ENCODE measurements at regions of chr9 and their contacts with region 1.

Region 1: DNA sequence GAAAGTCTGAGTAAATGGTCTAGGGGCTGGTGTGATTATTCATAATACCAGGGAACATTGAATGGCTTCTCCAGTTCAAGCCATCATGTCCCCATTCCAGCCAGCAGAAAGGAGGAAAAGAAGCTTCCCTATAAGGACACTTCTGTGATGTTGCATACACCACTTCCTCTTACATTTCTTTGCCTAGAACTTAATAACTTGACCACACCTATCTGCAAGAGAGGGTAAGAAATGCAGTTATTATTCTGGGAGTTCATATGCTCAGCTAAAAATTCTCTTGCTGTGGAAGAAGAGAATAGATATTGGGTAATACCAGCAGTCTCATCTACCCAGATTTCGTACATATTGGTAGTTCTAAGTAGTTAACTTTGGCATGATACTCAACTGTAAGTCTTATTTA is 166.1 kb downstream of the SLC28A3 start:
- DNase-seq: no peak
- CTCF ChIP-seq: no peak

Region 2: GRCh38 chr9:84146893-84147710 is 27.4 kb before region 1 on chr9:
- CTCF ChIA-PET with region 1: interaction called, 19 read pairs
- POLR2A ChIA-PET with region 1: no interaction called
- DNase-seq: no peak
- CTCF ChIP-seq: no peak

Region 3: DNA sequence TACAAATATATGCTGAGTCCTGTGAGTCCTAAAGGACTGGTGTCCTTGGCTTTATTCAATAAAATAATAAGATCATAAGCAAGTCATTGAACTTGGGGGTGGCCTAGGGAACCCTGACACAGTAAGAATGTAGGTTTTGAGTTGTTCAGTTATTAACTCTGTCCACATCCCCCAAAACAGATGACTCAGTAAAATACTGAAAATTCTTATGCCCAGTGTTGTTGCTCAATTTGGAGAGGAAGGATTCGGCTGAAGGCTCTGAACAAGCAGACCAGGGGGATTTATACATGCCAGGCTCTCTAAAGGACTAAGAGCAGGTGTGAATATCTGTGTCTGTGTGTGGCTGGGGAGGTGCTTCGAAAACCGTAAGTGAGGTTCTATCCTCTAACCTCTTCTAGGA is 20.2 kb before region 1 on chr9:
- CTCF ChIA-PET with region 1: interaction called, 19 read pairs
- POLR2A ChIA-PET with region 1: no interaction called
- DNase-seq: no peak
- CTCF ChIP-seq: no peak

Region 4: DNA sequence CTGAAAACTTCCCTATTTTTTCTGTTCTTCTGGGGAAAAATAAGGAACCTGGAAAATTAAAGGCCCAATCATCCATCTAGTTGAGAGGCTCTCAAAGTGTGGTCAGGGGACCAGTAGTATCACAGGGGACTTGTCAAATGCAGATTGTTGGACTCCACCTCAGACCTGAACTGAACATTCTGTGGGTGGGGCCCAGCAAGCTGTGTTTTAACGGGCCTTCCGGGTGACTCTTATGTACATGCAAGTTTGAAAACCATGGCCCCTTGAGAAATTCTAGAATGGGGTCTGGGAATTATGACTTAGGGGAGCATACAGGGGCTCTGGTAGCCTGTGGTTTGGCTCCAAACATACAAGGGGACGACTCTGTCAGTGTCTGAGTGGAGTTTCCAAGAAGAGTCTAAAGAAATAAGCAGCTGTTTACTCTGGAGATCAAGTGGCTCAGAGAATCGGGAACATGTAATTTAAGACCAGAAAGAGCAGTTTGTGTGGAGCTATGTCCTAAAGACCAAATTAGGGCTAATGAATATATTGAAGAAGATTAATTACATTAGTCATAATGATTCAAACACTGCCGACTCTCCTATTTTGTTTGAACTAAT is 11.3 kb before region 1 on chr9:
- CTCF ChIA-PET with region 1: interaction called, 32 read pairs
- POLR2A ChIA-PET with region 1: no interaction called
- DNase-seq: no peak
- CTCF ChIP-seq: no peak

Region 5: GRCh38 chr9:84187090-84187489 is 12.6 kb after region 1 on chr9:
- CTCF ChIA-PET with region 1: interaction called, 24 read pairs
- POLR2A ChIA-PET with region 1: interaction called, 3 read pairs
- DNase-seq: no peak
- CTCF ChIP-seq: no peak

Region 6: GRCh38 chr9:84230355-84231145 is 56.1 kb after region 1 on chr9:
- CTCF ChIA-PET with region 1: interaction called, 19 read pairs
- POLR2A ChIA-PET with region 1: no interaction called
- DNase-seq: no peak
- CTCF ChIP-seq: no peak

Region 7: DNA sequence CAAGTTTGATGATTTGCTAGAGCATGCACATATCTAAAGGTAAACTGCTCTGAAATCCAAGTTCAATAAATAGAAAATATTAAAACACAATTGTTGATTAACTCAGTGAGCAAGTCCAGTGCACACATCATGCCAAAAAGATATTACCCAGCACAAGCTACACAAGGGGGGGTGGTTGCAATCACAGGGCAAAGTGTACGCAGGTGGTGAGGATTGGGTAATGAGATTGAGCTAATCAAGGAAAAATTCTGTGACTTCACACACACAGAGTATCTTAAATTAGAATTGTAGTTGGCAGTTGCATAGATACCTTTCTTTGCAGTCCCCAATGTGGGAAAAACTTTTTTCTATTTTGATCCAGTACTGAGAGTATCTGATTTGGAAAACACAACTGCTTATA is 339.0 kb after region 1 on chr9:
- CTCF ChIA-PET with region 1: no interaction called
- POLR2A ChIA-PET with region 1: no interaction called
- DNase-seq: no peak
- CTCF ChIP-seq: no peak